ENCODE measurements at regions of chr11 and their contacts with region 1.

Region 1: DNA sequence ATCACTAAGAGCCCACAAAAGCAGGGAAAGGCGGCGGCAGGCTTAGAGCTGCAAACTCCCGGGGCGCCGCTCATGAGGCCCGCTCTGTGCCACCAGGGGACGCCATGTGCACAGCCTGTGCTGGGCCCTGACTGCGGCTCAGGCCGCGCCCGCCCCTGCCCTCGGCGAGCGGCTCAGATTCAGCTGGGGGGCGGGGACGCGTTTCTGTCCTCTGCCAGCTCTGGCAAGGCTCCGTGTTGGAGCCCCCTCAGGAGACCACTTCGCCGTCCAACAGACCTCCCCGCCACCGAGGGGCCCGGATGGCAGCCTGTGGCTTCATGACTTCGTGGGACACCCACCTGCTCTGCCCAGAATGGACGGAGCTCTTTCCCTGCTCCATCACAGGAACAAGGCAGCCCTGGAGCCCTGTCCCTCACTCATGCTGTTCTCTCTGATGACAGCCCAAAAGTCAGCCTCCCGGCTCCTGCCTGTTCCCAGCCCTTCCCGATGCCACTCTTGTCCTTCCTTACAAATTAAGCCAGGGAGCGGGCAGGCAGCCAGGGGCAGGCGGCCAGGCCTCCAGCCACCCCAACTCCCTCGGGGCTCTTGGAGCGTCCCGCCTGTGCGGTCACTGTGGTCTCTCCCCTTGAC is 69.1 kb downstream of the NAT10 start:
- DNase-seq: peak; percentile 61 to 87 (median 81)
- ATAC-seq: peak; percentile 100
- H3K4me3 ChIP-seq: peak overlapping the region in 1 of 2 experiments; percentile 18
- H3K4me3 Mint-ChIP-seq: peak overlapping the region; percentile 43
- H3K27ac ChIP-seq: no peak overlapping the region
- H3K27ac Mint-ChIP-seq: no peak overlapping the region
- H3K4me1 ChIP-seq: peaks cover 4% of the 10 kb centered on the region
- H3K4me1 Mint-ChIP-seq: peaks cover 3% of the 10 kb centered on the region
- H3K27me3 ChIP-seq: no peaks in the 10 kb centered on the region
- H3K27me3 Mint-ChIP-seq: peaks cover 4% of the 10 kb centered on the region
- CTCF ChIP-seq: peak; percentile 79

Region 2: DNA sequence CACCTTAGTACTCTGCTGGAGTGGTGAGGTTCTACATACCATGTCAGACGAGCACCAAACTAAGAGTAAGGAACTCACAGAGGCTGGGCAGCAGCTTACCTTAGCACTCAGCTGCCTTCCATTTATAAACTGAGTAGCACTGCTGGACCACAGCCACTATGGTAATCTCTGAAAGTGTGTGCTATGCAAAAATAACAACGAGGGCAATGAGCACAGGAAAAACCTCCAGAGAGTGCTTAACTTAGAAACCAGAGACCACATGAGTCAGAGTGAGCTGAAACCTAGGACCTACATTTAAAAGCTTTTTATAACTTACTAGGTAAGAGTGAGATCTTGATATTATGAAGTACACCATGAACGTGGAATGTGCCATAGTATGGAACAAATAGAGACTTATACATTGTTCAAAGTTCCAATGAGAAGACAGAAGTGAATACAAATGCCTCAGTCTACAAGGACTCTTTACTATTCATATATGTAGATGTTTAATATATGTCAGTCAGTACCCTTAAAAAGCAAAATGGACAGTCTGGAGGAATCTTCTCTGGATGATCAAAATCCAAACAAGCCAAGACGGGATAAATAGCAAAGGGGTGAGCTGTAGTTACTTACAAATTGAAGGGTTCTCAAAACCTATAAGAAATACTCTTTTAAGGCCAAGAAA is 421.1 kb before region 1 on chr11:
- CTCF ChIA-PET with region 1: no interaction called
- POLR2A ChIA-PET with region 1: no interaction called
- intact Hi-C with region 1: no loop called
- DNase-seq: no peak
- ATAC-seq: no peak
- H3K4me3 ChIP-seq: no peak overlapping the region
- H3K4me3 Mint-ChIP-seq: no peak overlapping the region
- H3K27ac ChIP-seq: no peak overlapping the region
- H3K27ac Mint-ChIP-seq: no peak overlapping the region
- H3K4me1 ChIP-seq: no peaks in the 10 kb centered on the region
- H3K4me1 Mint-ChIP-seq: no peaks in the 10 kb centered on the region
- H3K27me3 ChIP-seq: no peaks in the 10 kb centered on the region
- H3K27me3 Mint-ChIP-seq: no peaks in the 10 kb centered on the region
- CTCF ChIP-seq: no peak

Region 3: GRCh38 chr11:33835143-33835878 is 339.2 kb before region 1 on chr11:
- CTCF ChIA-PET with region 1: no interaction called
- POLR2A ChIA-PET with region 1: no interaction called
- intact Hi-C with region 1: no loop called
- DNase-seq: peak in 2 of 9 experiments; percentile 10 to 22
- ATAC-seq: no peak
- H3K4me3 ChIP-seq: no peak overlapping the region
- H3K4me3 Mint-ChIP-seq: no peak overlapping the region
- H3K27ac ChIP-seq: no peak overlapping the region
- H3K27ac Mint-ChIP-seq: no peak overlapping the region
- H3K4me1 ChIP-seq: no peaks in the 10 kb centered on the region
- H3K4me1 Mint-ChIP-seq: no peaks in the 10 kb centered on the region
- H3K27me3 ChIP-seq: no peaks in the 10 kb centered on the region
- H3K27me3 Mint-ChIP-seq: peaks cover 33% of the 10 kb centered on the region
- CTCF ChIP-seq: peak; percentile 21

Region 4: DNA sequence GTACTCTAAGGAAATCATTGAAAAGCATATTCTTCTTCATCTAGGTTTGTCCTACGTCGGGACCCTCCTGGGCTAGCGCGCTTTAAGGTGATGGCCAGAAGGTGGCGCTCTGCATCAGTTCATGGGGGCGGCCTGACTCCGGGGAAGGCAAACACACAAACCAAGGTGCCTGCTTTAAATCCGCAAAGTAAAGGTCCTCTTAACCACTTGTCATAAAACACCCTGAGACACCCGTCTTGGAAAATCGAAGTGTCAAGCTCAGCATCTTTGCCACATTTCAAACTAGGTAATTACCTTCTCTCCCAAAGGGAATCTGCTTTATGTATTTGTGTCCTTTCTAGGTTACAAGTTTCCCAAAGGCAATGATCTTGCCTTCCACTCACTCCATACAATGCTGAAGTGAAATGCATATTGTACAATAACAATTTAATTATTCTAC is 316.6 kb before region 1 on chr11:
- CTCF ChIA-PET with region 1: interaction called, 7 read pairs
- POLR2A ChIA-PET with region 1: no interaction called
- intact Hi-C with region 1: loop called in 1 of 2 experiments (anchors 5 kb)
- DNase-seq: peak; percentile 43 to 82 (median 75)
- ATAC-seq: peak; percentile 87
- H3K4me3 ChIP-seq: no peak overlapping the region
- H3K4me3 Mint-ChIP-seq: no peak overlapping the region
- H3K27ac ChIP-seq: no peak overlapping the region
- H3K27ac Mint-ChIP-seq: no peak overlapping the region
- H3K4me1 ChIP-seq: no peaks in the 10 kb centered on the region
- H3K4me1 Mint-ChIP-seq: no peaks in the 10 kb centered on the region
- H3K27me3 ChIP-seq: peaks cover 6 to 7% of the 10 kb centered on the region in 2 experiments
- H3K27me3 Mint-ChIP-seq: peaks cover 50% of the 10 kb centered on the region
- CTCF ChIP-seq: peak; percentile 81

Region 5: DNA sequence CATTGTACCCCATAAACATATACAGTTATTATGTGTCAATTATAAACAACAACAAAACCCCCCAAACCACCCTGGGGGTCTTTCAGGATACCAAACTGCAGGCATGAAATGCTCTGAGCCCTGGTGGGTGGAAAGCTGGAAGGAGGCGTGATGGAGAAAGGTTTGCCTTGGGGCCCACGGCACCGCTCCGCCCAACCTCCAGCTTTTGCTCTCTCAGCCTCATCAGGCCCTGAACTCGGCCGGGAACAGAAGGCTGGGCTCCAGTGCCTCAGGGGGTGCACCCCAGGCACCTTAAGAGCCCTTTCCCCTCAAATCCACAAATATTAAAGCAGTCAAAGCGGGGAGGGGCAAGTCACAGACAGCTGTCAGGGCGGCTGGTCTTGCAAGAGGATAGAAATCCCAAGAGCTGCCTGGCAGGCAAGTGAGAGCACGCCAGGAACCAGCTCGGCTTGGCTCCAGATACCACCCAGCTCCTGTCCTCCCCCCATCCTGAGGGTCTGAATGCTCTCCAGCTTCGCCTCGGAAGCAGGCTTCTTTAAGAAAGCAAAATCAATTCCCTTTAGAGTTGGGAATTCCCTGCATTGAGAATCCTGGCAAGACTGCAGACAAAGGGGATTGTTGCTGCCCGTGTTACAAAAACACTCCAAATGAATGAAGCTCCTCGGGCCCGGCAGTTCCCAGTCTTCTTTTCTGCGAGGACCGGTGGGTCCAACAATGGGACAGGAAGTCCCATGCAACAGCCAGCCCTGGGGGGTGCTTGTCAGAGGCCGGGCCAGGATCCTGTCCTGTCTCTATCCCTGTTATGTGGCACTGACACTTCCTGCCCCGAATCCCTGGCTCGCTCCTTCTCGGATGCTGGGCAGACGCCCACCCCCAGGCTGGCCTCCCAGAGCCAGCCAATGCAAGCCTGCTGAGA is 11.7 kb after region 1 on chr11:
- CTCF ChIA-PET with region 1: interaction called, 32 read pairs
- POLR2A ChIA-PET with region 1: no interaction called
- intact Hi-C with region 1: no loop called
- DNase-seq: no peak
- ATAC-seq: no peak
- H3K4me3 ChIP-seq: no peak overlapping the region
- H3K4me3 Mint-ChIP-seq: no peak overlapping the region
- H3K27ac ChIP-seq: no peak overlapping the region
- H3K27ac Mint-ChIP-seq: no peak overlapping the region
- H3K4me1 ChIP-seq: no peaks in the 10 kb centered on the region
- H3K4me1 Mint-ChIP-seq: no peaks in the 10 kb centered on the region
- H3K27me3 ChIP-seq: no peaks in the 10 kb centered on the region
- H3K27me3 Mint-ChIP-seq: no peaks in the 10 kb centered on the region
- CTCF ChIP-seq: no peak

Region 6: DNA sequence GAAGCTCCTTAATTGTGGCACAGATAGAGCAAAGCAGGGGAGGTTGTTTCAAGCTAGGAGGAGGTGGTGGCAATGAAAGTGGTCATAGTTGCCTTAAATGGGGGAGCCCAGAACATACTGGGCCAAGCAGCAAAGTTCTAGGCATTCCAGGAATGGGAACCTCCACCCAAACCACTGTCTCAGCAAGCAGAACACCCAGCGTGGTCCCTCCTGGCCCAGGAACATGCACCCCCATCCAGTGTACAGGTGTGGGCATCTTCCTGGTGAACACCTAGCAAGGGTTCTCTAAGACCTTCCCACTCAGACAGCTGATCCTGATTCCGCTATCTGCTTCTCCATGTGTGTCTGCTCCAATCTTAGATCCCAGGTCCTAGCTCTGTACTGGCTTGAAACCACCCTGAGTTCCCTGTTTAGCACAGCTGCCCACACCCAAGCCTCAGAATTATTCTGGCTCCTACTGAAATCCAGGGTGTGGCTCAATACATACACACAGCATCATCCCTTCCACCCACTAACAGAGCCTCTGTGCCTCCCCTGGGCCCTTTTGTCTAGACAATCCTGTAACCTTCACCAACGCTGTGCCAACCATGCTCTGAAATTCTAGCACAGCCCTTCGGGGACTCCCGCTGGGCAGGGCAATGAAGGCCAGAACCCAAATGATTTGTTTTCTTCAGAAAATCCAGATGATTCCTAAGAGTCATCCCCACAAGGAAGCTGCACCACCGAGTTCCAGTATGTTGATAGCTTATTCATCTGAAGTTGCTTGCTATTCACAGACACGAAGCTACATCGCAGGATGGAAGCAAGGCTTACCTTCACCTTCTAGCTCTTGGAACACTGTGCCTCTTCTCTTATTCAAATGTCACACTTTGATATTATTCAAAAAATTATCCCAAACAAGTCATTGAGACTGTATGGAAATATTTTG is 106.7 kb after region 1 on chr11:
- CTCF ChIA-PET with region 1: interaction called, 12 read pairs
- POLR2A ChIA-PET with region 1: no interaction called
- intact Hi-C with region 1: no loop called
- DNase-seq: no peak
- ATAC-seq: no peak
- H3K4me3 ChIP-seq: no peak overlapping the region
- H3K4me3 Mint-ChIP-seq: no peak overlapping the region
- H3K27ac ChIP-seq: no peak overlapping the region
- H3K27ac Mint-ChIP-seq: no peak overlapping the region
- H3K4me1 ChIP-seq: no peaks in the 10 kb centered on the region
- H3K4me1 Mint-ChIP-seq: no peaks in the 10 kb centered on the region
- H3K27me3 ChIP-seq: no peaks in the 10 kb centered on the region
- H3K27me3 Mint-ChIP-seq: no peaks in the 10 kb centered on the region
- CTCF ChIP-seq: no peak

Region 7: DNA sequence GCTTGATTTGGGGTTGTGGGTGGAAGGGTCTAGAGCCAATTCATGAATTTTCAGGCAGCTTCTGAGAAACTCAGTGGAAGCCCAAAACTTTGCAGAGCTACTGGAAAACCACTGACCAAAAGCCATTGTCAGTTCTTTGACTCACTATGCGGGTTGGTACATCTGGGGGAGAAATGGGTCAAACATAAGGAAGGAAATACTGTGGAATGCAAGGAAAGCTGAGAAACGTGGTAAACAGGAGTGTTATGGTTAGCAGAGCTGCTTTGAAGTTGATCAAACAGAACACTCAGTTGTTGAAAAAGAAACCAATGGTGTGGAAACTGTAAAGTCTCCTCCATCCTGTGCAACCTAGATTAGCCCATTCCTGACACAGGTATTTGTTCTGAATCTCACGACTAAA is 189.6 kb after region 1 on chr11:
- CTCF ChIA-PET with region 1: interaction called, 119 read pairs
- POLR2A ChIA-PET with region 1: interaction called, 4 read pairs
- intact Hi-C with region 1: loop called in 1 of 2 experiments (anchors 1 kb)
- DNase-seq: peak in 1 of 9 experiments; percentile 14
- ATAC-seq: no peak
- H3K4me3 ChIP-seq: no peak overlapping the region
- H3K4me3 Mint-ChIP-seq: no peak overlapping the region
- H3K27ac ChIP-seq: no peak overlapping the region
- H3K27ac Mint-ChIP-seq: no peak overlapping the region
- H3K4me1 ChIP-seq: no peaks in the 10 kb centered on the region
- H3K4me1 Mint-ChIP-seq: peaks cover 7% of the 10 kb centered on the region
- H3K27me3 ChIP-seq: peaks cover 0 to 5% of the 10 kb centered on the region in 2 experiments
- H3K27me3 Mint-ChIP-seq: peaks cover 21% of the 10 kb centered on the region
- CTCF ChIP-seq: no peak

Region 8: GRCh38 chr11:34492806-34493414 is 318.4 kb after region 1 on chr11:
- CTCF ChIA-PET with region 1: interaction called, 6 read pairs
- POLR2A ChIA-PET with region 1: no interaction called
- intact Hi-C with region 1: loop called in 1 of 2 experiments (anchors 2 kb)
- DNase-seq: peak in 5 of 9 experiments; percentile 26 to 55 (median 42)
- ATAC-seq: no peak
- H3K4me3 ChIP-seq: no peak overlapping the region
- H3K4me3 Mint-ChIP-seq: no peak overlapping the region
- H3K27ac ChIP-seq: no peak overlapping the region
- H3K27ac Mint-ChIP-seq: no peak overlapping the region
- H3K4me1 ChIP-seq: no peaks in the 10 kb centered on the region
- H3K4me1 Mint-ChIP-seq: no peaks in the 10 kb centered on the region
- H3K27me3 ChIP-seq: no peaks in the 10 kb centered on the region
- H3K27me3 Mint-ChIP-seq: peaks cover 2% of the 10 kb centered on the region
- CTCF ChIP-seq: peak; percentile 42